ENCODE measurements at regions of chr11 and their contacts with region 1.

Region 1: GRCh38 chr11:75867775-75868374 is 52.9 kb downstream of the UVRAG start:
- DNase-seq: peak in 1 of 2 experiments; percentile 73
- H3K4me3 ChIP-seq: no peak overlapping the region
- H3K4me3 Mint-ChIP-seq: no peak overlapping the region
- H3K27ac Mint-ChIP-seq: peak overlapping the region; percentile 30
- H3K4me1 ChIP-seq: peaks cover 14% of the 10 kb centered on the region
- H3K4me1 Mint-ChIP-seq: peaks cover 10% of the 10 kb centered on the region
- H3K27me3 ChIP-seq: no peaks in the 10 kb centered on the region
- H3K27me3 Mint-ChIP-seq: no peaks in the 10 kb centered on the region
- CTCF ChIP-seq: peak; percentile 89 to 90

Region 2: GRCh38 chr11:75718419-75719339 is 149.2 kb before region 1 on chr11:
- CTCF ChIA-PET with region 1: interaction called, 4 read pairs
- POLR2A ChIA-PET with region 1: no interaction called
- intact Hi-C with region 1: loop called (anchors 2 kb)
- DNase-seq: no peak
- H3K4me3 ChIP-seq: no peak overlapping the region
- H3K4me3 Mint-ChIP-seq: no peak overlapping the region
- H3K27ac Mint-ChIP-seq: peak overlapping the region; percentile 65
- H3K4me1 ChIP-seq: peaks cover 28% of the 10 kb centered on the region
- H3K4me1 Mint-ChIP-seq: peaks cover 18% of the 10 kb centered on the region
- H3K27me3 ChIP-seq: no peaks in the 10 kb centered on the region
- H3K27me3 Mint-ChIP-seq: no peaks in the 10 kb centered on the region
- CTCF ChIP-seq: no peak

Region 3: DNA sequence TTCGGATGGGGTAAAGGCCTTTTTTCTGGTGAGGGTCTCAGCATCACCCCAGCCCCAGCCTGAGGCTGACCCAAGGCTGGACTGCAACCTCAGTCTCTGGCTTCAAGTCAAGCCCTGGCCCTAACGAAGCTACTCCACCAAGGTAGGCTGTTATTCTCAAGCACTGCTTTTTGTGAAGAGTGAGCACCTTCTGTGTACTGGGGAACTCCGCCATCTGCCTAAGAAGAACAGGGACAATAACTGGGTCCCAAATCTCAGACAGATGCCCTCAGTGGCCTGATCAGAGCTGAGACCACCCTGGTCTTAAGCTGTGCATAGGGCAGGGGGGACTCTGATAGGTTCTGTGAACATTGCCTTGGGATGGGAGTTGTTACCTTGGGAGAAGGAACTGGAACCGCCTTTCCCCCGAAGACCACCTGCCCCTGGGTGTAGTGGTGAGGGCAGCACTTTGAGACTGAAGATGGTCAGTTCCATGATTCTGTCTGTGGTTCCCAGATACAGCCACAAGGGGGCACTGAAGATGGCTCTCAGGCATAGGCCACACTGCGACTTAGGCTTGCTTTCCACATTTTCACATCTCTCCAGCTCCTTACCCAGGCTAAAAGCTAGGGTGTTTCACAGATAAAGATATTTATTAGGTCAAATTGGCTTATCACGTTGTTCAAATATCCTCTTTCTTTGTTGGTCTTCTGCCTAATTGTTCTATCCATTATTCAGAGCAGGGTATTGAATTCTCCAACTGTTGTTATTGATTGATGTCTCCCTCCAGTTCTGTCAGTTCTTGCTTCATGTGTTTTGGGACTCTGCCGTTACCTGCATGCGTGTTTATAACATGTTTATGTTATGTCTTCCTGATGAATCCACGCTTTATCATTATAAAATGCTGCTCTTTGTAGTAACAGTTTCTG is 64.7 kb before region 1 on chr11:
- CTCF ChIA-PET with region 1: interaction called, 27 read pairs
- POLR2A ChIA-PET with region 1: no interaction called
- intact Hi-C with region 1: loop called (anchors 1 kb)
- DNase-seq: peak; percentile 79 to 89
- H3K4me3 ChIP-seq: no peak overlapping the region
- H3K4me3 Mint-ChIP-seq: no peak overlapping the region
- H3K27ac Mint-ChIP-seq: no peak overlapping the region
- H3K4me1 ChIP-seq: no peaks in the 10 kb centered on the region
- H3K4me1 Mint-ChIP-seq: no peaks in the 10 kb centered on the region
- H3K27me3 ChIP-seq: no peaks in the 10 kb centered on the region
- H3K27me3 Mint-ChIP-seq: no peaks in the 10 kb centered on the region
- CTCF ChIP-seq: peak; percentile 98